Transverse colon (tissue), 4 donors: ENCODE measurements at regions of chr19 and their contacts with region 1.

Region 1: GRCh38 chr19:52237771-52238400 is 31.5 kb upstream of the ZNF766 start:
- DNase-seq: peak; percentile 59
- H3K4me3 ChIP-seq: no peak overlapping the region
- H3K27ac ChIP-seq: no peak overlapping the region
- H3K4me1 ChIP-seq: no peaks in the 10 kb centered on the region
- H3K27me3 ChIP-seq: no peaks in the 10 kb centered on the region
- CTCF ChIP-seq: peak; percentile 87 to 91 (median 89)
- EP300 ChIP-seq: no peak
- POLR2A ChIP-seq: no peak

Region 2: GRCh38 chr19:52139252-52140031 is 98.4 kb before region 1 on chr19 and contains the start of gene ZNF616:
- in situ Hi-C with region 1: loop called in 2 of 4 experiments (anchors 5 to 10 kb)
- intact Hi-C with region 1: loop called (anchors 5 kb)
- DNase-seq: peak; percentile 99
- H3K4me3 ChIP-seq: peak within 1 kb of the TSS; percentile 52 to 79 (median 62)
- H3K27ac ChIP-seq: peak within 1 kb of the TSS; percentile 94 to 100 (median 96)
- H3K4me1 ChIP-seq: peaks cover 0 to 17% (median 14%) of the 10 kb centered on the region in 4 donors
- H3K27me3 ChIP-seq: no peaks in the 10 kb centered on the region
- CTCF ChIP-seq: peak; percentile 72 to 93 (median 86)
- EP300 ChIP-seq: no peak
- POLR2A ChIP-seq: peak; percentile 86
- total RNA-seq, gene ZNF616: 2.2 to 8.4 (median 7.2) TPM

Region 3: GRCh38 chr19:52428937-52429336 is 191.1 kb after region 1 on chr19 and contains the start of gene ZNF534:
- in situ Hi-C with region 1: no loop called
- intact Hi-C with region 1: no loop called
- DNase-seq: no peak
- H3K4me3 ChIP-seq: no peak within 1 kb of the TSS
- H3K27ac ChIP-seq: no peak within 1 kb of the TSS
- H3K4me1 ChIP-seq: no peaks in the 10 kb centered on the region
- H3K27me3 ChIP-seq: no peaks in the 10 kb centered on the region
- CTCF ChIP-seq: no peak
- EP300 ChIP-seq: no peak
- POLR2A ChIP-seq: no peak
- total RNA-seq, gene ZNF534: not detected